Ovary (tissue), 10 donors: ENCODE measurements at regions of chr1 and their contacts with region 1.

Region 1: DNA sequence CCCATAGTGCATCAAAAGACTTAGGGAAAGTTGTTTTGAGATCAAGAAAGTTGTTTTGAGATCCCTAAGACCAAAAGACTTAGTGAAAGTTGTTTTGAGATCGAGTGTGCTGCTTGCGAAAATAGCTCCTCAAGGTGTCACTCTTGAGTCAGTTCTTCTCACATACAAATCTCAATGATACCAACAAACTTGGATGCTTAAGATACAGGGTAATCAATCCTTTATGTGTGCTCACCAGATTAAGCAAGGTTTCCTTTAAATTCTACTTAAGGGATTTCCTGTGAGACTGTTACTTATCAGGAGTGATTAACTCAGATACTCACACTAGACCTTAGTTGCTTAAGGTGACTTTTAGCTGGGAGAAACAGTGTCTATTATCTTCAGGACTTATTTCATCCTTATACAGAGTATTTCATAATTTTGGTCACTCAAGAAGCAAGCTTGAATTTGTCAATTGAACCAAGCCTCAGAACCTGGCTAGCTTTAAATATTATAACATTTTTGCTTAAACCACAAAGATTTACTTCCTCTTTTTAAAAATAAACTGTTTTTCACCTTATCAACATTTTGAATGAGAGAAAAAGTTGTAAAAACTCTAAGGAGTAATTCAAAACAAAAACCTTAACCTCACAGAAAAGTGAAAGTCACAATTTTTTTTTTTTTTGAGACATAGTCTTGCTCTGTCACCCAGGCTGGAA is 8.0 kb upstream of the RLF start:
- DNase-seq: no peak
- H3K4me3 ChIP-seq: no peak overlapping the region
- H3K27ac ChIP-seq: no peak overlapping the region
- H3K4me1 ChIP-seq: no peaks in the 10 kb centered on the region
- H3K27me3 ChIP-seq: no peaks in the 10 kb centered on the region
- CTCF ChIP-seq: peak in 2 of 3 donors; percentile 38 to 39
- EP300 ChIP-seq: no peak
- POLR2A ChIP-seq: no peak

Region 2: GRCh38 chr1:39973503-39974135 is 179.6 kb before region 1 on chr1:
- intact Hi-C with region 1: no loop called
- DNase-seq: peak; percentile 58 to 80 (median 76)
- H3K4me3 ChIP-seq: no peak overlapping the region
- H3K27ac ChIP-seq: no peak overlapping the region
- H3K4me1 ChIP-seq: no peaks in the 10 kb centered on the region
- H3K27me3 ChIP-seq: no peaks in the 10 kb centered on the region
- CTCF ChIP-seq: peak; percentile 82 to 85 (median 83)
- EP300 ChIP-seq: no peak
- POLR2A ChIP-seq: no peak

Region 3: GRCh38 chr1:40315239-40315794 is 162.1 kb after region 1 on chr1:
- intact Hi-C with region 1: loop called in 3 of 4 experiments (anchors 10 kb)
- DNase-seq: peak; percentile 58 to 86 (median 74)
- H3K4me3 ChIP-seq: peak overlapping the region; percentile 31
- H3K27ac ChIP-seq: no peak overlapping the region
- H3K4me1 ChIP-seq: peaks cover 6% of the 10 kb centered on the region
- H3K27me3 ChIP-seq: peaks cover 4% of the 10 kb centered on the region
- CTCF ChIP-seq: peak; percentile 67 to 77 (median 74)
- EP300 ChIP-seq: no peak
- POLR2A ChIP-seq: no peak